Right lobe of liver (tissue), 6 donors: ENCODE measurements at regions of chr2 and their contacts with region 1.

Region 1: DNA sequence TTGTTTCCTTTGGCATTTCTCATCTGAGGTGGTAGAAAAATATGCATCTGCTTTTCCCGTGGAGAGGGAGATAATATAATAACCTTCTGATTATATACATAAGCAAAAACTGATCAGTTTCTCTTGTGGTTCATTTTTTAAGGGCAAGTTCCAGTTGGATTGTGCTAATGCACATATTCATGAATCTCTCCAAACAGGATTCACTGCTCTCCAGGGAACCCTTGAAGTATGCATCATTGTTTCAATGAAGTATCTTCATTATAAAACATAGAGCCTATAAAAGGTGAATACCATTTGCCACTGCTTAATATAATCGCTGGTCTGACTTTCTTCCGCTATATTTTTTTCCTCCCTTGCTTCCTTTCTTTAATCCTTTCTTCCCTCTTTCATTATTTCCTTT is 384.7 kb downstream of the FIGN start:
- DNase-seq: no peak
- ATAC-seq: no peak
- H3K4me3 ChIP-seq: no peak overlapping the region
- H3K27ac ChIP-seq: no peak overlapping the region
- H3K4me1 ChIP-seq: no peaks in the 10 kb centered on the region
- H3K27me3 ChIP-seq: no peaks in the 10 kb centered on the region
- CTCF ChIP-seq: no peak
- POLR2A ChIP-seq: no peak

Region 2: DNA sequence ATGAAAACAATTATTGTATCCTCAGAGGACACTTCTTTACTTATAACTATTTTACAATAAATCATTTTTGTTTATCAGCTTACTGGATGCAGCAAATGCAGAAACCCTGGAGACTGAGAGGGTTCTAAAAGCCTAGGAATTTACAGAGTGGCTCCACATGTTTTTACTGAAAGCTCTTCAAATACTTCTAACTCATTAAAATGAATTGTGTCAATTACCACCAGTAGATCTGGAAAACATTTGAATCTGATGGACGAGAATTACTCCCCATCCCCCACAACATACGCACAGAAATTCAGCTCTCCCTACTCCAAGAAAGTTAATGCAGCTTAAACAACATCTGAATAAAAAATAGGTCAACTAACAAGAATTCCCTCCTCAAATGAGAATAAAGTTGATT is 704.5 kb after region 1 on chr2:
- intact Hi-C with region 1: loop called in 1 of 2 experiments (anchors 10 kb)
- DNase-seq: no peak
- ATAC-seq: no peak
- H3K4me3 ChIP-seq: no peak overlapping the region
- H3K27ac ChIP-seq: no peak overlapping the region
- H3K4me1 ChIP-seq: no peaks in the 10 kb centered on the region
- H3K27me3 ChIP-seq: no peaks in the 10 kb centered on the region
- CTCF ChIP-seq: no peak
- POLR2A ChIP-seq: no peak